ENCODE measurements at regions of chr10 and their contacts with region 1.

Region 1: DNA sequence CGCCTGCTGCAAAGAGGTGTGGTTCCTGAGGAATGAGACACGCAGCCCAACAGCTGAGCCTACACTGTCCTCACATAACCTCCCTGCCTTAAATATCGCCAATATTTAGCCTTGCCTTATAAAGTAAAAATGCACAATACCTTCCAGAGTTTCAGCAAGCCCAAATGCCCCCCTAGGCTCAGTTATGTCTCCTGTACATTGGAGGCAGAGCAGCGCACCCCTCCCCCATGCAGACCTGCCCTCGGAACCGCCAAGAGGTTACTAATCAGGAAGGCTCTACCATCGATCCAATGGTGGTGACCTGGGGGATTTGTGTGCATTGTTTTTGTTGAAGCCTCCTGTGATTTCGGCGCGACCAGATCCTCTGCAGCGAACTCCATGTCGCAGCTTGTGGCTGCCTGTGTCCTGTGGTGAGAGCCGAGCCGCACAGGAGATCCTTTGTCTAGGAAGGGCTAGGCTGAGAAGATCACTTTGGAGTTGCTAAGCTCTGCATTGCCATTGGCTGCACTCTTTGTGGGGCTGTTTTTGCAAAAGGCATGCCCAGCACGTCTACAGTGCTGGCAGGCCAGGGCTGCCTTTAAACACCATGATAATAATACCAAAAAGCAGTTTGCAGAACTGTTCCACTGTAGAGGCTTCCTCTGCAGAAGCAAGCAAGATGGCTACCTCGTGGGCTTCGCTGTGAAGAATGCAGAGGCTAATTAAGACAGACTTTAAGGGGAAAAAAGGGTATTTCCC is 40.1 kb downstream of the TET1 start:
- DNase-seq: peak; percentile 35
- H3K4me3 Mint-ChIP-seq: peak overlapping the region; percentile 85
- H3K27ac Mint-ChIP-seq: peak overlapping the region; percentile 80
- H3K4me1 Mint-ChIP-seq: peaks cover 29% of the 10 kb centered on the region
- H3K27me3 Mint-ChIP-seq: no peaks in the 10 kb centered on the region

Region 2: DNA sequence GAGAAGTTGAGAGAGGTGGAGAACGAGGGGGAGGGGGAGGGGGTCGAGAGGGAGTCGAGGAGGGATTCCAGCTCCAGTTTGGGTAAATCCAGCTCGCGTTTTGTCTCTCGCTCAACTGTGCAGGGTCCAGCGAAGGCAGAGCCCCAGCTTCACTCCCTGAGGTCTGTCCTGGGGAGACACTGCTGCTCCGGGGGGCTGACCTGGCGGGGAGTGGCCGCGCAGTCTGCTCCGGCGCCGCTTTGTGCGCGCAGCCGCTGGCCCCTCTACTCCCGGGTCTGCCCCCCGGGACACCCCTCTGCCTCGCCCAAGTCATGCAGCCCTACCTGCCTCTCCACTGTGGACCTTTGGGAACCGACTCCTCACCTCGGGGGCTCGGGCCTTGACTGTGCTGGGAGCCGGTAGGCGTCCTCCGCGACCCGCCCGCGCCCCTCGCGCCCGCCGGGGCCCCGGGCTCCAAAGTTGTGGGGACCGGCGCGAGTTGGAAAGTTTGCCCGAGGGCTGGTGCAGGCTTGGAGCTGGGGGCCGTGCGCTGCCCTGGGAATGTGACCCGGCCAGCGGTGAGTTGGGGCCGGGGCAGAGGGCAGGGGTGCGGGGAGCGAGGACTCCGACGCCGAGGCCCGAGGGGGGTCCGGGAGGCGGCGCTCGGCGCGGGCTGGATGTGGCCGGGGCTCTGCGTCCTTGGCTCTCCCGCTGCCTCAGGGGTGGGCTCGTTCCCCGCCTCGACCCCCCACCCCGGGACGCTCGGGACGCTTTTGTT is 39.8 kb before region 1 on chr10 and contains the start of gene TET1:
- intact Hi-C with region 1: loop called (anchors 1 kb)
- DNase-seq: no peak
- H3K4me3 Mint-ChIP-seq: peak within 1 kb of the TSS; percentile 72
- H3K27ac Mint-ChIP-seq: no peak within 1 kb of the TSS
- H3K4me1 Mint-ChIP-seq: peaks cover 28% of the 10 kb centered on the region
- H3K27me3 Mint-ChIP-seq: peaks cover 46% of the 10 kb centered on the region
- total RNA-seq, gene TET1: 0.71 and 0.73 TPM in 2 replicates

Region 3: DNA sequence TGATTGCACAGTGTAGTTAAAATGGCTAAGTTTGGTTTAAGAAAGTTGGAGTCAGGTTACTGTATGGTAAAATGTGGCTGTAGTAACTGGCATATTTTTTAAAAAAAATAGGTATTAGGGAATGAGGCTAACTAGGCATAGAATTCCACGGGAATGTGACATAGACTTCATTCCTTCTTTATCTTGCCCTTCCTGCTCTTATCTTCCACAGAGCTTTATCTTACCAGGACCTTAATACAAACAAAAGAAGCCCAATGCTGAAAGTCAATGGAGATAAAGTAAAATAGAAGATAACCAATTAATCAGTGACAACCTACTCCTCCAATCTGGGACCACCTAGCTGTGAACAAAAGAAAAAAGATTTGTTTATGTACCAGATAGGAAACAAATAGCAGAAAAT is 18.0 kb after region 1 on chr10:
- intact Hi-C with region 1: no loop called
- DNase-seq: no peak
- H3K4me3 Mint-ChIP-seq: no peak overlapping the region
- H3K27ac Mint-ChIP-seq: no peak overlapping the region
- H3K4me1 Mint-ChIP-seq: no peaks in the 10 kb centered on the region
- H3K27me3 Mint-ChIP-seq: no peaks in the 10 kb centered on the region

Region 4: DNA sequence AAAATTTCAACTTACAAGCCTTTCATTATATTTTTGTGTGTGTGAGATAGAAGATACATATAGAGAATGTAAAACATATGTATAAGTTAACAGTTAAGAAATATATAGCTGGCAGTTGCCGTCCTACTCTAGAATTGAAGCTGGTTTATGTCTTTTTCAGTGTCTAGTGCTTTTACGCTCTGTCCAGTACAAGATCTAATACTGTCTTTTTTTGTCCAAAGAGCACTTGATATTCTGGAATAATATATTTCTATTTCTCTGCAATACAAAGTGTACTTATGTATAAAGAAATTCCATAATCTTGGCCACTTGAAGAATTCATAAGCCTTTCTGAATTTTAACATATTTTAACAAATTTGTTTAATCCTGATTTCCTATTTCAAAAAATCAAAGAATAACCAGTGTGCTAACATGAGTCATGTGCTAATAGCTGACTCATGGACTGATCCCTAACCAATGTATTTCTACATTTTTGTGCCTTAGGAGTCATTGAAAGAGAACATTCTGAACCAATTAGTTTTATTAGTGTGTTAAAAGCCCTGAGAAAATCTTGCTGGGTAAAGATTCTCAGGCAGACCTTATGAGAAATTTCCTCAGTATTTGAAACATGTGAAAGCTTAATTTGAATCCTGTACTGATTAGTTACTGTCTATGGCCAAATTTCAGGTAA is 47.6 kb after region 1 on chr10:
- intact Hi-C with region 1: no loop called
- DNase-seq: no peak
- H3K4me3 Mint-ChIP-seq: no peak overlapping the region
- H3K27ac Mint-ChIP-seq: no peak overlapping the region
- H3K4me1 Mint-ChIP-seq: no peaks in the 10 kb centered on the region
- H3K27me3 Mint-ChIP-seq: no peaks in the 10 kb centered on the region

Measured in activated T-helper 1 cell treated with anti-CD3 and anti-CD28 coated beads, Interleukin-12 subunit alpha, Interleukin-12 subunit beta, Interleukin-2, Interleukin-4 antibody, amounts not matched to agents 30 ng/mL and 10 ng/mL and 1 ng/mL, durations not matched to agents 14 hours and 24 hours and 36 hours (primary cell).